ENCODE measurements at regions of chr16 and their contacts with region 1.

Region 1: GRCh38 chr16:46689365-46690280 is at the start of gene ORC6:
- DNase-seq: peak; percentile 97 to 98 (median 97)
- H3K4me3 ChIP-seq: peak within 1 kb of the TSS; percentile 92 to 97
- H3K4me3 Mint-ChIP-seq: no peak within 1 kb of the TSS
- H3K27ac ChIP-seq: peak within 1 kb of the TSS; percentile 92
- H3K27ac Mint-ChIP-seq: no peak within 1 kb of the TSS
- H3K4me1 ChIP-seq: peaks cover 46% of the 10 kb centered on the region
- H3K4me1 Mint-ChIP-seq: peaks cover 26 to 33% (median 30%) of the 10 kb centered on the region in 4 donors
- H3K27me3 ChIP-seq: no peaks in the 10 kb centered on the region
- H3K27me3 Mint-ChIP-seq: no peaks in the 10 kb centered on the region
- total RNA-seq, gene ORC6: 3.0 to 3.3 TPM

Region 2: GRCh38 chr16:46789499-46790414 is 100.1 kb after region 1 on chr16:
- CTCF ChIA-PET with region 1: no interaction called
- POLR2A ChIA-PET with region 1: no interaction called
- intact Hi-C with region 1: loop called (anchors 1 kb)
- DNase-seq: peak; percentile 77 to 82 (median 79)
- H3K4me3 ChIP-seq: peak overlapping the region in 1 of 2 donors; percentile 76
- H3K4me3 Mint-ChIP-seq: peak overlapping the region; percentile 79 to 90 (median 85)
- H3K27ac ChIP-seq: peak overlapping the region; percentile 15
- H3K27ac Mint-ChIP-seq: peak overlapping the region; percentile 28 to 89 (median 87)
- H3K4me1 ChIP-seq: peaks cover 8% of the 10 kb centered on the region
- H3K4me1 Mint-ChIP-seq: peaks cover 15 to 20% (median 17%) of the 10 kb centered on the region in 4 donors
- H3K27me3 ChIP-seq: no peaks in the 10 kb centered on the region
- H3K27me3 Mint-ChIP-seq: no peaks in the 10 kb centered on the region

Region 3: DNA sequence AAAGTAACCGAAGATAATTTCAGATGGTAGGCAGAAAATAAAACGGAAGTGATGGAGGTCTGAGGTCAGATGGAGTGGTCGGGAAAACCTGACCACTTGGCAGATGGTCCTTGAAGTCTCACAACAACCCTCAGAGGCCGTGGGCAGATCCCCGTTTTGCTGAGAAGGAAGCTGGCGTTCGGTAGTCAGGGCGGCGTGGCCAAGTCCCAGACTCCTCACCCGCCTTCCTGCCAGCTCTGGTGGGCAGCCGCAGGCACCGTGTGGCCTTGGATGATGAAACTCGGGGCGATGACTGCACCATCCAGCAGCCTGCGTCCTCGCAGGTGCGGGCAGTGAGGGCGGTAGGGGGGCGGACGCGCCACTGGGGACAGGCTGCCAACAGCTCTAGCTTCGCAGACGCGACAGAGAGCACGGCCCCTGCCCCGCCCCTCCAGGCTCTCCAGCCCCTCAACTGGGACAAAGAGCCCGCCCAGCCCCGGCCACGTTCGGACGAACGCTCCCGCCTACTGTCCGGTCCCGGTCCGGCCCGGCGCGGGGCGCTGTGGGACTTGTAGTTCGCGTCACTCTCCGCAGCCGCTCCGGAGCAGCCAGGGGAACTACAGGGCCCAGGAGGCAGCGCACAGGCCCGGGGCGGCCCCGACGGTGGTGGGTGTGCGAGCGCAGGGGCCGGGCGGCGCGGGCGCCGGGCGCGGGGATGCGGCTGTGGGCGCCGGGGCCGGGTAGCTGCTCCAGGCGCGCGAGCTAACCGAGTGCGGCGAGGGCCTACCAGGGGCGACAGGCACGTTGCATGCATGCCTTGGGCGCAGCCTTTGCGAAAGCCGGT is 194.3 kb after region 1 on chr16 and contains the start of gene GPT2:
- CTCF ChIA-PET with region 1: no interaction called
- POLR2A ChIA-PET with region 1: no interaction called
- intact Hi-C with region 1: loop called (anchors 1 kb)
- DNase-seq: peak; percentile 57 to 69 (median 64)
- H3K4me3 ChIP-seq: peak within 1 kb of the TSS; percentile 49 to 66
- H3K4me3 Mint-ChIP-seq: peak within 1 kb of the TSS; percentile 81 to 98 (median 88)
- H3K27ac ChIP-seq: no peak within 1 kb of the TSS
- H3K27ac Mint-ChIP-seq: peak within 1 kb of the TSS in 4 of 7 donors; percentile 7 to 77 (median 66)
- H3K4me1 ChIP-seq: peaks cover 10% of the 10 kb centered on the region
- H3K4me1 Mint-ChIP-seq: peaks cover 8 to 23% (median 15%) of the 10 kb centered on the region in 4 donors
- H3K27me3 ChIP-seq: no peaks in the 10 kb centered on the region
- H3K27me3 Mint-ChIP-seq: peaks cover 3 to 5% of the 10 kb centered on the region in 2 donors
- total RNA-seq, gene GPT2: 1.2 to 1.5 TPM

Region 4: GRCh38 chr16:46973207-46973995 is 283.8 kb after region 1 on chr16 and contains the start of gene DNAJA2:
- CTCF ChIA-PET with region 1: no interaction called
- POLR2A ChIA-PET with region 1: interaction called, 3 read pairs
- intact Hi-C with region 1: loop called (anchors 1 kb)
- DNase-seq: peak; percentile 87 to 92 (median 91)
- H3K4me3 ChIP-seq: peak within 1 kb of the TSS; percentile 85 to 95
- H3K4me3 Mint-ChIP-seq: peak within 1 kb of the TSS; percentile 92 to 98 (median 95)
- H3K27ac ChIP-seq: peak within 1 kb of the TSS; percentile 91
- H3K27ac Mint-ChIP-seq: peak within 1 kb of the TSS; percentile 95 to 100 (median 99)
- H3K4me1 ChIP-seq: peaks cover 64% of the 10 kb centered on the region
- H3K4me1 Mint-ChIP-seq: peaks cover 35 to 74% (median 54%) of the 10 kb centered on the region in 4 donors
- H3K27me3 ChIP-seq: no peaks in the 10 kb centered on the region
- H3K27me3 Mint-ChIP-seq: no peaks in the 10 kb centered on the region
- total RNA-seq, gene DNAJA2: 73.2 to 79.5 TPM

Region 5: DNA sequence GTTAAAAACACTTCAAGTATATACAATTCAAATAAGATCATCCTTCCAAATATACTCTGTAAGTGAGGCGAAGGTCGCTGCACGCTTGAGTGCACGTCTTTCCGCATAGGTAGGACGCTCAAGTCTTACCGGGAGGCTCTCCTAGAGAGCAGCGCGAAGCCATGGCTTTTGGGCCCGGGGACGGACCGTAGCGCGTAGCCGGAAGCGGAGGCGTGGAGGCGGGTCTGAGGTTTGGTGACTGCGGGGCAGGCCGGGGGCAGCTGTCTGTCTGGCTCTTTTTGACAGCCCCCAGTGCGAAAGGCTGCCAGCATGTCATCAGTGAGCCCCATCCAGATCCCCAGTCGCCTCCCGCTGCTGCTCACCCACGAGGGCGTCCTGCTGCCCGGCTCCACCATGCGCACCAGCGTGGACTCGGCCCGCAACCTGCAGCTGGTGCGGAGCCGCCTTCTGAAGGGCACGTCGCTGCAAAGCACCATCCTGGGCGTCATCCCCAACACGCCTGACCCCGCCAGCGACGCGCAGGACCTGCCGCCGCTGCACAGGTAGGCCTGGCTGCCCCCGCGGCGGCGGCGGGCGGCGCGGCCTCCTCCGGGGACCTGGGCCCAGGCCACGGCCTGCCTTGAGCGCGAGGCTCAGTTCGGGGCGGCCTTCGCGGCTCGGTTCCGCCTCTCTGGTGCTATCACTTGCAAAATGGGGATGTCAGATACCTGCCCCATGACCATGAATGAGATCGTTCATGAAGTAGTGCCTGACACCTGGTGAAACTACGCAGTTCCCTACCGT is 1554.6 kb after region 1 on chr16 and contains the start of gene LONP2:
- CTCF ChIA-PET with region 1: no interaction called
- POLR2A ChIA-PET with region 1: no interaction called
- intact Hi-C with region 1: loop called (anchors 10 kb)
- DNase-seq: peak; percentile 91 to 93 (median 92)
- H3K4me3 ChIP-seq: peak within 1 kb of the TSS; percentile 91 to 94
- H3K4me3 Mint-ChIP-seq: peak within 1 kb of the TSS; percentile 88 to 98 (median 94)
- H3K27ac ChIP-seq: peak within 1 kb of the TSS; percentile 70
- H3K27ac Mint-ChIP-seq: peak within 1 kb of the TSS; percentile 86 to 98 (median 95)
- H3K4me1 ChIP-seq: peaks cover 45% of the 10 kb centered on the region
- H3K4me1 Mint-ChIP-seq: peaks cover 28 to 52% (median 43%) of the 10 kb centered on the region in 4 donors
- H3K27me3 ChIP-seq: no peaks in the 10 kb centered on the region
- H3K27me3 Mint-ChIP-seq: no peaks in the 10 kb centered on the region
- total RNA-seq, gene LONP2: 96.2 to 101 TPM

Region 6: DNA sequence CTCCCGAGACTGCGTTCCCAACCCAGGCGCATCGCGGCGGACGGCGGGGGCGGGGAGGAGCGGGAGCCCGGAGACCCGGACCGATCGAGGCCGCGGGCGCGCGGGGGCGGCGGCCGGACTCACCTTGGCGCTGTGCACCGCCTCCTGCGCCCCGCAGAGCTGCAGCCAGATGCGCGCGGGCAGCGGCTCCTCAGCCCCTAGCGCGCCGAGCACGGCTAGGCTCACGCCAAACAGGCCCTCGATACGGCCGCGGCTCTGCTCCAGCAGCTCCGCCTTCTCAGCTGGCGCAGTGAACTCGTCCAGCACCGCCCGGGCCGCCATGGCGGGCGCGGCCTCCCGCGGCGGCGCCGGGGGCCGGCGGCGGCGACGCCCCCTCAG is 1920.0 kb after region 1 on chr16:
- CTCF ChIA-PET with region 1: no interaction called
- POLR2A ChIA-PET with region 1: no interaction called
- intact Hi-C with region 1: loop called (anchors 2 kb)
- DNase-seq: no peak
- H3K4me3 ChIP-seq: peak overlapping the region; percentile 55 to 82
- H3K4me3 Mint-ChIP-seq: peak overlapping the region in 1 of 8 donors; percentile 90
- H3K27ac ChIP-seq: peak overlapping the region; percentile 87
- H3K27ac Mint-ChIP-seq: peak overlapping the region; percentile 92 to 97 (median 95)
- H3K4me1 ChIP-seq: peaks cover 81% of the 10 kb centered on the region
- H3K4me1 Mint-ChIP-seq: peaks cover 35 to 52% (median 39%) of the 10 kb centered on the region in 4 donors
- H3K27me3 ChIP-seq: no peaks in the 10 kb centered on the region
- H3K27me3 Mint-ChIP-seq: no peaks in the 10 kb centered on the region

Measured in CD4-positive, alpha-beta memory T cell (primary cell).